GM10248 (cell line): ENCODE measurements at regions of chr12 and their contacts with region 1.

Region 1: DNA sequence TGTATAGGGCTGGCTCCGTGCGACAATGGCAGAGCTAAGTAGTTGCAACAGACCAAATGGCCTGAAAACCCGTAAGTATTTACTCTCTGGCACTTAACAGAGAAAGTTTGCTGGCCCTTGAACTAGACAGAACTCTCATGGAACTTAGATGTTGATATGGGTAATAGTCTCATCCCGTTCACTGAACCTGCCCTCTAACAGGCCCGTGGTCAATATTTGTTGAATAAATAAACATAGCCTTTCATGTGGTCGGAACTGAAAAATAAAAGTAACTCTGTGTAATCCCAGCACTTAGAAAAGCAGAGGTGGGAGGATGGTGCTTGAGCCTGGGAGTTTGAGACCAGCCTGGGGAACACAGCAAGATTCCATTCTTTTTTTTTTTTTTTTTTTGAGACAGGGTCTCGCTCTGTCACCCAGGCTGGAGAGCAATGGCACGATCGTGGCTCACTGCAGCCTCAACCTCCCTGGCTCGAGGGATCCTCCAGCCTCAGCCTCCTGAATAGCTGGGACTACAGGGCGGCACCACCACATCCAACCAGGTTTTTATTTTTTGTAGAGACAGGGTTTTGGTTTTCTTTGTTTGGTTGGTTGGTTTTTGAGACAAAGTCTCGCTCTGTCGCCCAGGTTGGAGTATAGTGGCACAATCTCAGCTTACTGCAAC is 29.7 kb downstream of the KDM2B start:
- DNase-seq: no peak
- CTCF ChIP-seq: no peak

Region 2: GRCh38 chr12:121507245-121507644 is 43.9 kb before region 1 on chr12:
- CTCF ChIA-PET with region 1: no interaction called
- POLR2A ChIA-PET with region 1: no interaction called
- DNase-seq: no peak
- CTCF ChIP-seq: no peak

Region 3: GRCh38 chr12:121530600-121531355 is 20.3 kb before region 1 on chr12:
- CTCF ChIA-PET with region 1: interaction called, 10 read pairs
- POLR2A ChIA-PET with region 1: no interaction called
- DNase-seq: peak; percentile 66
- CTCF ChIP-seq: no peak

Region 4: DNA sequence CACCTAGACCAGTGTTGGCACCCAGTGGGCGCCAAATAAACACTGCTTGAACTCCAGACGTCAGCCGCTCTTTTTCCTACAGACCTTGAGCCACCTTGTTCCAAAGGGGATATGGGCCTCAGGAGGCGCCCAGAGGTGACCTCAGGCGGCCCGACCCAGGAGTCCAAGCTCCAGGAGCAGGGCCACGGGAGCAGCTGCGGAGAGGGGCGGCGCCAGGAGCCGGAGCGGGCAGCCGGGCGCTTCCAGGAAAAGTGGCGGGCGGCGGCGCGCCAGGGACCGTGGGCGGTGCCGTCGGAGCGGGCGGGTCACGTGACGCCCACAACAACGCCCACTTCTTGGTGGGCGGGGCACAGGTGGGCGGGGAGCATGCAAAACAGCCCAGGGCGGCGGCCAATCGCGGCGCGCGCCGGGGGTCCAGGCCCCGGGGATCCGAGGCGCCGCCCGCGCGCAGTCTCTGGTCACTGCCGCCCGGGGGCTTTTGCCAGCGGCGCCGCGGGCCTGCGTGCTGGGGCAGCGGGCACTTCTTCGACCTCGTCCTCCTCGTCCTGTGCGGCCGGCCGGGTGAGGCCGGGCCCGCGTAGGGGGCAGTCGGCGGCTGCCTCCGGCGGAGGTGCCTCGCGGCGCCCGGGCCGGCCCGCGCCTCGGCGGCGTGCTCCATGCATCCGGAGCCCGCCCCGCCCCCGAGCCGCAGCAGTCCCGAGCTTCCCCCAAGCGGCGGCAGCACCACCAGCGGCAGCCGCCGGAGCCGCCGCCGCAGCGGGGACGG is 75.2 kb after region 1 on chr12 and contains the start of gene ORAI1:
- CTCF ChIA-PET with region 1: interaction called, 55 read pairs
- POLR2A ChIA-PET with region 1: interaction called, 3 read pairs
- DNase-seq: peak; percentile 94
- CTCF ChIP-seq: peak; percentile 25

Region 5: DNA sequence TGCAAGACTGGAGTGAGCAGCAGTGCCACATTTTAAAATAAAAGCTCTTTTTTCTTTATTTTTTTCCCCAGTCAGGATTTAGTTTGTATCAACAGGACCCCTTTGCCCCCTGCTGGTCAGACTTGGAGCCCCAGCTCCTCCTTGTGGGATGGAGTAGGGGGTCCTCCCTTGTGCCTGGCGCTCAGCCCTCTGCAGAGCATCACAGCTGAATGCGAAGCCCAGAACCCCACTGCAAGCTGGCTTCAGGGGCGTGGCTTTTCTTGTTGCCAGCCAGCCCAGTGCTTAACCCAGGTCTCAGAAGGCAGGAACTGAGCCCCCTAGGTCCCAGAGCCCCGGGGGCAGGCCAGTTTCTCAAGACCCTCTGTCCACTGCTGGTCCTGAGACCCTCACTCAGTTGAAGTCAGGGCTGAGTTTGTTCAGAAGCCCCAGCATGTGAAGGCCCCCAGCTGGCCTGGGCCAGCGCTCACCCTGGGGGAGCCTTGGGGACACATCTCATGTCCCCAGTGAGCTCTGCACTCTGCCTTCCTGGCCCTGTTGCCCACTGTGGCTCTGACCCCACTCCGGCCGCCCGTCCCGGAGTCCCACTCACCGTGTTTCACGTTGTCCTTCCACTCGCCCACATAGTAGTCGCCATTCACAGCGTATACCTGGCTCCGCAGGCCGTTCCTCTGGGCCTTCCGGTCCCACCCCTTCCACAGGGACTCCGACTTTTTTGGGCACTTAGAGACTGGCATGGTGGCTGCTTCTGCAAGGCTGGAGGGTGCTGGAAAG is 117.8 kb after region 1 on chr12:
- CTCF ChIA-PET with region 1: interaction called, 61 read pairs
- POLR2A ChIA-PET with region 1: no interaction called
- DNase-seq: no peak
- CTCF ChIP-seq: peak; percentile 48

Region 6: GRCh38 chr12:121765573-121765972 is 214.5 kb after region 1 on chr12:
- CTCF ChIA-PET with region 1: no interaction called
- POLR2A ChIA-PET with region 1: interaction called, 10 read pairs
- DNase-seq: no peak
- CTCF ChIP-seq: no peak

Region 7: GRCh38 chr12:122225683-122226407 is 674.7 kb after region 1 on chr12 and contains the start of gene DIABLO:
- CTCF ChIA-PET with region 1: no interaction called
- POLR2A ChIA-PET with region 1: no interaction called
- DNase-seq: peak; percentile 99
- CTCF ChIP-seq: no peak